ENCODE measurements at regions of chr1 and their contacts with region 1.

Region 1: GRCh38 chr1:87684194-87684593 is 355.5 kb downstream of the LMO4 start:
- DNase-seq: no peak

Region 2: GRCh38 chr1:87335175-87335884 is 348.9 kb before region 1 on chr1:
- intact Hi-C with region 1: loop called (anchors 10 kb)
- DNase-seq: peak; percentile 94

Region 3: GRCh38 chr1:87478231-87478630 is 206.0 kb before region 1 on chr1:
- intact Hi-C with region 1: no loop called
- DNase-seq: no peak

Region 4: DNA sequence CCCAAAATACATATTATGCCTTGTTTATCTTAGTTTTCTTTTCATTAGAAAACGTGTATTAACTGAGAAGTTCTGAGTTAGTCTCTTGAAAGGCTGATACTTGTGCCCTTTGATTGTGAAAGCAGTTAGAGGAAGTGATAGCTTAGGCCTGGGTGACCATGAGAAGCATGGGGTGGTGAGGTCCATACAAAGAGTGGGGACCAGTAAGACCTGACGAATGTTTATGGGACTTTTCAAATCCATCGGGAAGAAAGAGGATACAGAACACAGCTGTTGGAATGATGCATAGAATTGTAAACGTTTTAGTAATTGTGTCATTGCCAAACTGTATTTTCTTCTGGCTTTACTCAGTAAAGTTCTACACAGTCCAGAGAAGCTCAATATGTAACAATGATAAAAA is 95.7 kb before region 1 on chr1:
- intact Hi-C with region 1: no loop called
- DNase-seq: no peak

Region 5: DNA sequence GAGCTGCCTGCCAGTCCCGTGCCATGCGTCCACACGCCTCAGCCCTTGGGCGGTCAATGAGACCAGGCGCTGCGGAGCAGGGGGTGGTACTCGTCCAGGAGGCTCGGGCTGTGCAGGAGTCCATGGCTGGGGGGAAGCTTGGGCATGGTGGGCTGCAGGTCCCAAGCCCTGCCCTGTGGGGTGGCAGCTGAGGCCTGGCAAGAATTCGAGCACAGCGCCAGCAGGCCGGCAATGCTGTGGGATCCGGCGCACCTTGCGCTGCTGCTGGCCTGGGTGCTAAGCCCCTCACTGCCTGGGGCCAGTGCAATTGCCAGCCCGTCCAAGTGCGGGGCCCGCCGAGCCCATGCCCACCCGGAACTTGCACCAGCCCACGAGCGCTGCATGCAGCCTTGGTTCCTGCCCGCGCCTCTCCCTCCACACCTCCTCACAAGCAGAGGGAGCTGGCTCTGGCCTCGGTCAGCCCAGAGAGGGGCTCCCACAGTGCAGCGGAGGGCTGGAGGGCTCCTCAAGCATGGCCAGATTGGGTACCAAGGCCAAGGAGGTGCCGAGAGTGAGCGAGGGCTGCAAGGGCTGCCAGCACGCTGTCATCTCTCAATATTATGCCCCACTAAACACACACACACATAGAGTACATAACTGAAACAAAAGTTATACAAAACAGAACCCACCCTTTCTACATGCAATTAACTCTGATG is 47.8 kb before region 1 on chr1:
- intact Hi-C with region 1: no loop called
- DNase-seq: no peak